ENCODE measurements at regions of chr15 and their contacts with region 1.

Region 1: GRCh38 chr15:38817427-38818156 is 253.0 kb upstream of the RASGRP1 start:
- ATAC-seq: peak; percentile 88 to 100 (median 94)
- H3K4me3 ChIP-seq: no peak overlapping the region
- H3K27ac ChIP-seq: no peak overlapping the region
- H3K4me1 ChIP-seq: no peaks in the 10 kb centered on the region

Region 2: DNA sequence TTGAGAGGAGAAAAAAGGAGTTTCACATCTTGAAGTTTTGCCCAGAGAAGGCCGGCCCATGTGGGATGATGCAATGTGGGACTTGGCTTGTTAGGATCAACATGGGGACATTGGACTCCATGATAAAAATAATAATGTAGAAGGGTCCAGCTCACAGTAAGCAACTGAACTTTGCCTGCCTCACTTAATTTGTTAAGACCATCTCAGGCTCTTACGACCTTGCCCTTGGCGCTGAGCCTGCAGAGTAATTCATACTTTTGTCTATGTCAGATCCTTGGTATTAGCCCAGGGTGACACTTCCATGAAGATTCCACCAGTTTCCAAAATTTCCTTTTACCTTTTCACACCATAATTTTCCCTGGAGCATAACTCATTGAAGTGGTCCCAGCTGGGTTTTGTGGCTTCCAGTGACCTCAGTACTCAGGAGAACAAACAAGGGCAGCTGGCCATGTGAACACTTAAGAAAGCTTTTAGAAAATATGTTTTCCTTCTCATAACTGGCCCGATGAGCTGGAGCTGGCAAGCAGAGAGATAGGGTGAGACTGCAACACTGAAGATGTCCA is 62.4 kb after region 1 on chr15:
- in situ Hi-C with region 1: no loop called
- ATAC-seq: no peak
- H3K4me3 ChIP-seq: no peak overlapping the region
- H3K27ac ChIP-seq: no peak overlapping the region
- H3K4me1 ChIP-seq: no peaks in the 10 kb centered on the region

Region 3: GRCh38 chr15:38991126-38991525 is 173.5 kb after region 1 on chr15:
- in situ Hi-C with region 1: loop called in 1 of 9 experiments (anchors 25 kb)
- ATAC-seq: peak in 1 of 8 experiments; percentile 32
- H3K4me3 ChIP-seq: no peak overlapping the region
- H3K27ac ChIP-seq: no peak overlapping the region
- H3K4me1 ChIP-seq: peaks cover 0 to 6% of the 10 kb centered on the region in 2 donors

Region 4: GRCh38 chr15:39110336-39110735 is 292.7 kb after region 1 on chr15:
- in situ Hi-C with region 1: no loop called
- ATAC-seq: no peak
- H3K4me3 ChIP-seq: no peak overlapping the region
- H3K27ac ChIP-seq: no peak overlapping the region
- H3K4me1 ChIP-seq: no peaks in the 10 kb centered on the region

Region 5: DNA sequence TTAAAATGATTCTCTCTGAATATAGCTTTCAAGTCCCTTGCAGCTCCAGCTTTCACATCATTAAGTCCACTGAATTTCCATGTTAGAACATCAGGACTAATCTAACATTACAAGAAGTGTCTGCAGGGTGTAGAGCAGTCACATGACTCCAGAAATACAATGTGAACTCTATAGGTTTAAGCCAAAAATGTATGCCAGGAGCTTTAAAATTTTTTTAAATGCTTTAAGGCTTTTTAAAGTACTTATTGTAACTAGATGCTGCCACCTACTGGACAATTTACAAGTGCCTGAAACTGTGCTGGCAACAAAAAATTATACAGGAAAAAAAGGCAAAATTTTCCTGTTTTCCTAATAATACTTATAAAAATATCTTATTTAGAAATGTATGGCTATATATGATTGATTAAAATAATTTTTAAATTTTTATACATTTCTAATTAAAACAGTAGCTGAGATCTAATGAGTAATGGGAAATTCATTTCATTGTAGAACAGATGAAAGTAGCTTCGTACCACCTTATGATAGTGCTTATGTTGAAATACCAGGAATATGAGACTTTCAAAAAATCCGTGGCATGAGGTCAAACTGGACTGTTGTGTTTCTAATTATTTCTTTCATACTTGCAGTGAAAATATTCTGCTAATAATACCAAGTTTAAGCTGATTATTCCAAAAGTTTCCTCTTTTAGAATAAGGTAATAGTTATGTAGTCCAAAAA is 939.4 kb after region 1 on chr15:
- in situ Hi-C with region 1: loop called in 1 of 9 experiments (anchors 25 kb)
- ATAC-seq: peak in 1 of 8 experiments; percentile 38
- H3K4me3 ChIP-seq: no peak overlapping the region
- H3K27ac ChIP-seq: no peak overlapping the region
- H3K4me1 ChIP-seq: no peaks in the 10 kb centered on the region

Measured in motor neuron (in vitro differentiated cells).